Activated B cell treated with CpG ODN at 0.5 μM for 24 hours (primary cell): ENCODE measurements at regions of chr7 and their contacts with region 1.

Region 1: GRCh38 chr7:5677538-5678294 is 103.7 kb downstream of the RNF216 start:
- DNase-seq: no peak
- ATAC-seq: peak; percentile 41
- H3K4me3 Mint-ChIP-seq: no peak overlapping the region
- H3K27ac Mint-ChIP-seq: peak overlapping the region; percentile 73
- H3K4me1 Mint-ChIP-seq: peaks cover 55% of the 10 kb centered on the region
- H3K27me3 Mint-ChIP-seq: no peaks in the 10 kb centered on the region
- CTCF ChIP-seq: peak; percentile 29

Region 2: GRCh38 chr7:5363729-5364128 is 314.0 kb before region 1 on chr7:
- CTCF ChIA-PET with region 1: no interaction called
- POLR2A ChIA-PET with region 1: no interaction called
- intact Hi-C with region 1: loop called (anchors 10 kb)
- DNase-seq: no peak
- ATAC-seq: no peak
- H3K4me3 Mint-ChIP-seq: no peak overlapping the region
- H3K27ac Mint-ChIP-seq: no peak overlapping the region
- H3K4me1 Mint-ChIP-seq: peaks cover 22% of the 10 kb centered on the region
- H3K27me3 Mint-ChIP-seq: no peaks in the 10 kb centered on the region
- CTCF ChIP-seq: no peak

Region 3: GRCh38 chr7:5526100-5526905 is 151.4 kb before region 1 on chr7:
- CTCF ChIA-PET with region 1: interaction called, 4 read pairs
- POLR2A ChIA-PET with region 1: interaction called, 13 read pairs
- intact Hi-C with region 1: no loop called
- DNase-seq: peak; percentile 33
- ATAC-seq: no peak
- H3K4me3 Mint-ChIP-seq: peak overlapping the region; percentile 95
- H3K27ac Mint-ChIP-seq: peak overlapping the region; percentile 80
- H3K4me1 Mint-ChIP-seq: peaks cover 46% of the 10 kb centered on the region
- H3K27me3 Mint-ChIP-seq: no peaks in the 10 kb centered on the region
- CTCF ChIP-seq: no peak

Region 4: GRCh38 chr7:5567790-5568189 is 109.9 kb before region 1 on chr7:
- CTCF ChIA-PET with region 1: no interaction called
- POLR2A ChIA-PET with region 1: interaction called, 10 read pairs
- intact Hi-C with region 1: no loop called
- DNase-seq: no peak
- ATAC-seq: no peak
- H3K4me3 Mint-ChIP-seq: no peak overlapping the region
- H3K27ac Mint-ChIP-seq: no peak overlapping the region
- H3K4me1 Mint-ChIP-seq: peaks cover 20% of the 10 kb centered on the region
- H3K27me3 Mint-ChIP-seq: peaks cover 7% of the 10 kb centered on the region
- CTCF ChIP-seq: no peak

Region 5: DNA sequence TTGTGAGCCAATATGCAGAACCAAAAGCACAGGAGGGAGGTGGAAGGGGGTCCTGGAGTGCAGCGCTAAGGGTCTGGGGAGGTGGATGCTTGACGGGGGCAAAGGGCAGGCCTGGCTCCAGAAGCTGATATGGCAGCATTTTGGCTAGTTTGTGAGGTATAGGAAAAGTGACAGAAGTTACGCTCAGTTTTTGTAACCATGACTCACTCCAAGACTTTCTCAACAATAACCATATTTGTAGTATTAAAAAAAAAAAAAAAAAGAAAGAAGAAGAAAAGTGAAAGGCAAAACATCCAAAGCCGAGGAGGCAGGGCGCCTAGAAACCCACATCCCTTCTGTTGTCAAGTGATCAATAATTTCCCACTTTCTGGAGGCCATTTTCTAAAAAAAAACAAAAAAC is 11.4 kb after region 1 on chr7:
- CTCF ChIA-PET with region 1: interaction called, 48 read pairs
- POLR2A ChIA-PET with region 1: interaction called, 112 read pairs
- intact Hi-C with region 1: loop called (anchors 1 kb)
- DNase-seq: no peak
- ATAC-seq: no peak
- H3K4me3 Mint-ChIP-seq: no peak overlapping the region
- H3K27ac Mint-ChIP-seq: peak overlapping the region; percentile 47
- H3K4me1 Mint-ChIP-seq: peaks cover 89% of the 10 kb centered on the region
- H3K27me3 Mint-ChIP-seq: no peaks in the 10 kb centered on the region
- CTCF ChIP-seq: no peak